ENCODE measurements at regions of chr3 and their contacts with region 1.

Region 1: DNA sequence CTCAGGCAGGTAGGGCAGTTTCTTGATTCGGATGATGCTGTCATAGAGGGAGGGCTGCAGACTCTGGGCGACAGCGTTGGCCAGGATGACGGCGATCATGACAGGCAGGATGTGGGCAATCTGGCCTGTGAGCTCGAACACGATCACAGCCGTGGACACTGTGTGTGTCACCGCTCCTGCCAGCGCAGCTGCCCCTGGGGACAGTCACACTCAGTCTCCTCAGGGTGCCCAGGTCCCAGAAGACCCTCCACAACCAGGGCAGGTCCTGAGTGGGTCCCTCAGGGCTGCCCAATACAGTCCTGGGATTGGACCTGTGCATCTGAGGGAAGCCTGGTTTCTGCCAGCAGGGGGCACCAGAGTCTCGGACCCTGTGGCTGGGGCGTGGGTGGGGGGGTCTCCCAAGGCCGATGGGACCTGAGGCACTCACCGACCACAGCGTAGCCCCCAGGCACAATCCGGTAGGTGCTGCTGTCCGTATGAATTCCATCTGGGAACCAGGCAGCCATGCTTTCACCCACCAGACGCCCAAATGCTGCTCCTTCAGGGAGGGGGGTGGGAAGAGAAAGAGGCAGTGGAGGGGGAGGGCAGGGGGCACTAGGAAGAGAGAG is 7.2 kb downstream of the CLCN2 start:
- DNase-seq: peak; percentile 45
- H3K4me3 Mint-ChIP-seq: no peak overlapping the region
- H3K27ac Mint-ChIP-seq: no peak overlapping the region
- H3K4me1 Mint-ChIP-seq: peaks cover under 1% of the 10 kb centered on the region
- H3K27me3 Mint-ChIP-seq: no peaks in the 10 kb centered on the region
- CTCF ChIP-seq: peak; percentile 59

Region 2: DNA sequence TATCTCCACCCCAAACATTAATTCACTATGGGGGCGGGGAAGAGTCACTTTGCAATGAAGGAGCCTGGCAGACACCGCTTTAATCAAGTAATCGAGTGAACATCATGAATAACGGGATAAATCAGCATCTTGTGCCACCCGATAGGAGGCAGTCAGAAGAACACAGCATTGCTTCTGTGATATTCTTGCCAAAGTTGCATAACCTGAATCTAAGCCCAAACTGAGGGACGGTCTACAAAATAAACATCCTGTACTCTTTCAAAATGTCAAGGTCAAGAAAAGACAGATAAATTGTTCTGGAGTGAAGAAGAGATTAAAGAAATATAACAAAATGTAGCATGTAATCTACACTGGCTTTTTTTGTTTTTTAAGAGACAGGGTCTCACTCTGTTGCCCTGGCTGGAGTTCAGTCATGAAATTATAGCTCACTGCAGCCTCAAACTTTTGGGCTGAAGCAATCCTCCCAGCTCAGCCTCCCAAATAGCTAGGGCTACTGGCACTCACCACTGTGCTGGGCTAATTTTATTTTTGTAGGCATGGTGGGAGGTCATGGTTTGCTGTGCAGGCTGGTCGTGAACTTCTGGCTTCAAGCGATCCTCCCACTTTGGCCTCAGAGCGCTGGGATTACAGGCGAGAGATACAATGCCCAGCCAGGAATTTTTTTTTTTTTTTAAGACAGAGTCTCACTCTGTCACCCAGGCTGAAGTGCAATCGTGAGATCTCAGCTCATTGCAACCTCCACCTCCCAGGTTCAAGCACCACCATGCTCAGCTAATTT is 144.9 kb before region 1 on chr3:
- CTCF ChIA-PET with region 1: no interaction called
- POLR2A ChIA-PET with region 1: no interaction called
- intact Hi-C with region 1: no loop called
- DNase-seq: no peak
- H3K4me3 Mint-ChIP-seq: no peak overlapping the region
- H3K27ac Mint-ChIP-seq: no peak overlapping the region
- H3K4me1 Mint-ChIP-seq: no peaks in the 10 kb centered on the region
- H3K27me3 Mint-ChIP-seq: peaks cover 26% of the 10 kb centered on the region
- CTCF ChIP-seq: no peak

Region 3: DNA sequence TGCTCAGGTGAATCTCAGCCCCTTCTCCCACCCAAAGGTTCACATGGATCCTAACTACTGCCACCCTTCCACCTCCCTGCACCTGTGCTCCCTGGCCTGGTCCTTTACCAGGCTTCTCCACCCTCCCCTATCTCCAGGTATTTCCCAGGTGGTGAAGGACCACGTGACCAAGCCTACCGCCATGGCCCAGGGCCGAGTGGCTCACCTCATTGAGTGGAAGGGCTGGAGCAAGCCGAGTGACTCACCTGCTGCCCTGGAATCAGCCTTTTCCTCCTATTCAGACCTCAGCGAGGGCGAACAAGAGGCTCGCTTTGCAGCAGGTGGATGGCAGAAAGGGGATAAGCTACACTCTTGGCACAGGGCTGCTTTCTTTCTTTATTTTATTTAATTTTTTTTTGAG is 12.3 kb before region 1 on chr3:
- CTCF ChIA-PET with region 1: interaction called, 15 read pairs
- POLR2A ChIA-PET with region 1: no interaction called
- intact Hi-C with region 1: no loop called
- DNase-seq: peak; percentile 87
- H3K4me3 Mint-ChIP-seq: no peak overlapping the region
- H3K27ac Mint-ChIP-seq: no peak overlapping the region
- H3K4me1 Mint-ChIP-seq: peaks cover 25% of the 10 kb centered on the region
- H3K27me3 Mint-ChIP-seq: no peaks in the 10 kb centered on the region
- CTCF ChIP-seq: no peak

Measured in MCF 10A (cell line).